ENCODE measurements at regions of chr19 and their contacts with region 1.

Region 1: GRCh38 chr19:4803736-4804695 is 12.5 kb downstream of the FEM1A start:
- H3K4me3 ChIP-seq: no peak overlapping the region
- H3K27ac ChIP-seq: no peak overlapping the region
- H3K4me1 ChIP-seq: no peaks in the 10 kb centered on the region
- CTCF ChIP-seq: peak; percentile 96

Region 2: DNA sequence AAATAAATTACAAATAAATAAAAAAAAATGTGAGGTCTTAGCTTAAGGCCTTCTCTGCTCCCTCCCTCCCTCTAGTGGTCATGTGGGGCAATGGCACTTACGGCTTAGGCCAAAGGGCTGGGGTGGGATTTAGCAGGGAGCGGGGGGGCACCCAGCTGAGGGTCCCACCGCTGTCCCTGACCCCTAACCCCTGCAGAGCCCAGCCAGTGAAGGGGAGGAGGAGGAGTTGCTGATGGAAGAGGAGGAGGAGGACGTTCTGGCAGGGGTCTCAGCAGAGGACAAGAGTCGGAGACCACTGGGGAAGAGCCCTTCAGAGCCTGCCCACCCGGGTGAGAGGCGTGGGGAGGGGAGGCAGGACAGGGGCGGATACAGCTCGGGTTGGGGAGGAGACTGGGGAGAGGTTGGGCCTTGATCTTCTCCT is 451.3 kb before region 1 on chr19:
- CTCF ChIA-PET with region 1: no interaction called
- POLR2A ChIA-PET with region 1: no interaction called
- H3K4me3 ChIP-seq: no peak overlapping the region
- H3K27ac ChIP-seq: no peak overlapping the region
- H3K4me1 ChIP-seq: no peaks in the 10 kb centered on the region
- CTCF ChIP-seq: peak; percentile 52; the same call in 1 of the 2 replicates

Region 3: GRCh38 chr19:4723367-4724187 is 80.4 kb before region 1 on chr19 and contains the start of gene DPP9:
- CTCF ChIA-PET with region 1: interaction called, 11 read pairs
- POLR2A ChIA-PET with region 1: no interaction called
- H3K4me3 ChIP-seq: peak within 1 kb of the TSS; percentile 97
- H3K27ac ChIP-seq: peak within 1 kb of the TSS; percentile 66; the same call in 1 of the 2 replicates
- H3K4me1 ChIP-seq: peaks cover 3% of the 10 kb centered on the region; the same call in 1 of the 2 replicates
- CTCF ChIP-seq: peak; percentile 92

Region 4: DNA sequence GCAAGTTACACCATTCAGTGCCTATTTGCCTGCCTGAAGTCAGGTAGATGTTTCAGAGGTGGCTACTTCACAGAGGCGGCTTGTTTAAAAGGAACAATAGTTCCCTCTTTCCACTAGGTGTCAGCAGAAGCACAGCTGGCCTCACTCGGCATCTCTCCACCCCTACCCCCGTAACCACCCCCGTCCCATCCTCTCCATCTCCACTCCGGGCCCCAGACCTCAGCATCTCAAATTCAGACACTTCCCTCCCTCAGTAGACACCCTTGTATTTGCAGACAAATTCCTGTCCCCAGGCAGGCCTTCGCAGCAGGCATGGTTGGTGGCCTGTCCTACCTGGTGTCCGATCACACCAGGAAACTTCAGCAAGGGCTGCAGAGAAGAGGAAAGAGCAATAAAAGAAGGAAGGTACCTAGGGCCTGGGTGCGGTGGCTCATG is 71.3 kb before region 1 on chr19:
- CTCF ChIA-PET with region 1: interaction called, 69 read pairs
- POLR2A ChIA-PET with region 1: no interaction called
- H3K4me3 ChIP-seq: no peak overlapping the region
- H3K27ac ChIP-seq: no peak overlapping the region
- H3K4me1 ChIP-seq: no peaks in the 10 kb centered on the region
- CTCF ChIP-seq: peak; percentile 82

Measured in HEK293 (cell line).